Colonic mucosa (tissue), 4 donors: ENCODE measurements at regions of chr22 and their contacts with region 1.

Region 1: DNA sequence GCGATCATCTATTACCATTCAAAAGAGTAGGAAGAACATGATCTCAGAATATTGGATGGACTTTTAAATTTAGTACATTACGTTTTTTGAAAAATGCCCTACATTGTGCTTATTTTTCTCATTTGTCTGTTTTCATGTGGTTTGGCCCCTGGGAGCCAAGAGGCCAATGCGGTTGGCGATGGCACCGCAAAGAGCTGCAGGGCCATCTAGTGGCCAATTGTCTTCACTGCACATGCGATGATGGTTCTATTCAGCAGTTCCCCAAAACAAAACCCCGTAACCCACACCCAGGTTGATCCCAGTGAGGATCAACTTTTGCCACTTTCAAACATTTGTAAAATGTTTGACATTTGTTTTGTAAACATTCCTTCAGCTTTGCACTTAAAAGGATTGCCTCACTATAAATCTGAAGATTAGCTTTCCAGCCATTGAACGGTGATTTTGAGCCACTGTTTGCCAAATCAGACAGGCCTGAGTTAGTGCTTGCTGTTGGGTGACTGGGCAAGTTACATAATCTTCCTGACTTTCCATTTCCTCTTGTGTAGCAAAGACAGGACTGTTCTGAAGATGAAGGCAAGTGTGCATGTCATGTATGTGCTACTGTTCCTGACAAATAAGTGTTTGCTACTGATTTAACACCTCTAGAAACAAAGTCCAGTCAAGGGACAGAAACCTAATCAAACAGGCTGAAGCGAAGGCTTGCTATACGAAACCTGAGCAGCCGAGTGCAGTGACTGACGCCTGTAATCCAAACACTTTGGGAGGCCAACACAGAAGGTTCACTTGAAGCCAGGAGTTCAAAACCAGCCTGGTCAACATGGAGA is 29.2 kb upstream of the XBP1 start:
- DNase-seq: peak; percentile 83
- H3K4me3 ChIP-seq: no peak overlapping the region
- H3K27ac ChIP-seq: peak overlapping the region; percentile 7
- H3K4me1 ChIP-seq: no peaks in the 10 kb centered on the region
- H3K27me3 ChIP-seq: no peaks in the 10 kb centered on the region
- CTCF ChIP-seq: peak; percentile 98

Region 2: DNA sequence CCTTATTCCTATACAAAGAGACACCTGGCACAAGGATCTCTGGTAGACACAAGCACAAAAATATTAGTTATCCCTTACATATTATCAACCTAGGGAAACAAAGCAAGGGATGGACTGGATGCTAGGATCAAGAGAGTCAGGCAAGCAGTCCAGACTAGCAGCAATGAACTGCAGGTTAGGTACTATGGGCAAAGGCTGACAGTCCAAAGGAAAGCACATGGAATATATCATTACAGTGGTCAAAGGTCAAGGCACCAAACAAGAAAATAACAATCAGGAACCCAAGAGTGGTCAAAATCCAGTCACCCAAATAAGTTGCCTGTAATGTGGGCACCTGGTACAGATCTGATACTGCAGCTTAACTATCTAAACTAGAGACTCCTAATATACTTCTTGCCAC is 227.7 kb before region 1 on chr22:
- intact Hi-C with region 1: loop called (anchors 2 kb)
- DNase-seq: no peak
- H3K4me3 ChIP-seq: no peak overlapping the region
- H3K27ac ChIP-seq: no peak overlapping the region
- H3K4me1 ChIP-seq: no peaks in the 10 kb centered on the region
- H3K27me3 ChIP-seq: no peaks in the 10 kb centered on the region
- CTCF ChIP-seq: no peak

Region 3: GRCh38 chr22:28791841-28792490 is 37.6 kb before region 1 on chr22:
- intact Hi-C with region 1: loop called (anchors 5 kb)
- DNase-seq: no peak
- H3K4me3 ChIP-seq: no peak overlapping the region
- H3K27ac ChIP-seq: peak overlapping the region; percentile 27
- H3K4me1 ChIP-seq: no peaks in the 10 kb centered on the region
- H3K27me3 ChIP-seq: no peaks in the 10 kb centered on the region
- CTCF ChIP-seq: no peak